ENCODE measurements at regions of chr9 and their contacts with region 1.

Region 1: GRCh38 chr9:6197330-6197729 is 18.3 kb upstream of the IL33 start:
- DNase-seq: no peak
- H3K4me3 ChIP-seq: no peak overlapping the region
- H3K27ac ChIP-seq: no peak overlapping the region
- H3K4me1 ChIP-seq: no peaks in the 10 kb centered on the region
- H3K27me3 ChIP-seq: no peaks in the 10 kb centered on the region
- CTCF ChIP-seq: no peak
- POLR2A ChIP-seq: no peak

Region 2: GRCh38 chr9:5939530-5939929 is 257.8 kb before region 1 on chr9:
- intact Hi-C with region 1: no loop called
- DNase-seq: no peak
- H3K4me3 ChIP-seq: no peak overlapping the region
- H3K27ac ChIP-seq: no peak overlapping the region
- H3K4me1 ChIP-seq: no peaks in the 10 kb centered on the region
- H3K27me3 ChIP-seq: no peaks in the 10 kb centered on the region
- CTCF ChIP-seq: no peak
- POLR2A ChIP-seq: no peak

Region 3: GRCh38 chr9:6305954-6306563 is 108.7 kb after region 1 on chr9:
- intact Hi-C with region 1: loop called (anchors 10 kb)
- DNase-seq: no peak
- H3K4me3 ChIP-seq: no peak overlapping the region
- H3K27ac ChIP-seq: no peak overlapping the region
- H3K4me1 ChIP-seq: no peaks in the 10 kb centered on the region
- H3K27me3 ChIP-seq: no peaks in the 10 kb centered on the region
- CTCF ChIP-seq: peak; percentile 21 to 50 (median 38)
- POLR2A ChIP-seq: no peak